ENCODE measurements at regions of chr6 and their contacts with region 1.

Region 1: DNA sequence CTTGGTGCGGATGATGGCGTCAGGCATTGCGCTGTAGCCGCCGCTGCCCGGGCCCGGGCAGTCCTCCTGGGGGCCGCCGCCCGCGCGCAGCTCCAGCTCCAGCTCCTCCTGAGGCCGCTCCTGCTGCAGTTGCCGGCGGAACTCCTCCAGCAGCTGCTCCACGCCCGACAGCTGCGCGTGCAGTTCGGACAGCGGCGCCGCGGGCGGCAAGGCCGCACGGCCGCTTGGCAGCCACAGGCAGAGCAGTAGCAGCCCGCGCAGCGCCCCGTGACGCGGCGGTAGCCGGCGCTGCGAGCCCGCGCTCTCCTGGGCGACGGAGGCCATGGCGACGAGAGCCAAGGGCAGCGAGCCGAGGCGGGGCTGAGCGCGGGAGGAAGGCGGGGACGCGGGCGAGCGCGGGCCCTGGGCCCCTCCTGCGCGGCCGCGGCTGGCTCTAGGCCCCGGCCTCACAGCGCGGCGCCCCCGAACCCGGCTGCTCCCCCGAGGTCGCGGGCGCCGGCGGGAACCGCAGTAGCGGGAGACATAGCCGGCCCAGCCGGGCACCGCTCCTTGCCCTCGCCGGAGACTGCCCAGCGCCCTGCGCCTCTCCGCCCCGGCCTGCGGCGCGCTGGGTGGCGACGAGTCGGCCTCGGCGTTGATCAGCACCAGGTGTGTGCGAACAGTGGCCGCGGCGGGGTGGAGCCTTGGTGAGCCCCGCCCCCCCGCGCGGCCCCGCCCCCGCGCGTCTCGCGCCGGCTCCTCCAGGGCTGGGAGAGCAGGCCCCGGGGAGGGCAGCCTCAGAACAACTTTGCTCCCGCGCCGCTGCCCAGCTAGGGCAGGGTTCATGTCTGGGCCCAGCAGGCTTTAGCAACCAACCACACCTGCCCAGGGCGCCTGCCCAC is at the start of gene LRP11:
- DNase-seq: no peak
- H3K4me3 ChIP-seq: peak within 1 kb of the TSS; percentile 65
- H3K27me3 ChIP-seq: no peaks in the 10 kb centered on the region
- CTCF ChIP-seq: no peak
- polyA plus RNA-seq, gene LRP11: 26.3 and 32.6 TPM in 2 replicates

Region 2: DNA sequence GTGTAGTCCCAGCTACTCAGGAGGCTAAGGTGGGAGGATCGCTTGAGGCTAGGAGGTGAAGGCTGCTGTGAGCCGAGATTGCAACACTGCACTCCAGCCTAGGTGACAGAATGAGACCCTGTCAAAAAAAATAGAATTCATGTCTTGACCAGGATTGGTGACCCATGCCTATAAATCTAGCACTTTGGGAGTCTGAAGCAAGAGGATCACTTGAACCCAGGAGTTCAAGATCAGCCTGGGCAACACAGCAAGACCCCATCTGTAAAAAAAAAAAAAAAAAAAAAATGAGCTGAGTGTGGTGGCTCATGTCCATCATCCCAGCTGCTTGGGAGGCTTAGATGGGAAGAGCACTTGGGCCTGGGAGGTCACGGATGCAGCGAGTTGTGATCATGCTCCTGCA is 263.4 kb before region 1 on chr6:
- CTCF ChIA-PET with region 1: no interaction called
- POLR2A ChIA-PET with region 1: no interaction called
- DNase-seq: no peak
- H3K4me3 ChIP-seq: no peak overlapping the region
- H3K27me3 ChIP-seq: no peaks in the 10 kb centered on the region
- CTCF ChIP-seq: no peak

Region 3: DNA sequence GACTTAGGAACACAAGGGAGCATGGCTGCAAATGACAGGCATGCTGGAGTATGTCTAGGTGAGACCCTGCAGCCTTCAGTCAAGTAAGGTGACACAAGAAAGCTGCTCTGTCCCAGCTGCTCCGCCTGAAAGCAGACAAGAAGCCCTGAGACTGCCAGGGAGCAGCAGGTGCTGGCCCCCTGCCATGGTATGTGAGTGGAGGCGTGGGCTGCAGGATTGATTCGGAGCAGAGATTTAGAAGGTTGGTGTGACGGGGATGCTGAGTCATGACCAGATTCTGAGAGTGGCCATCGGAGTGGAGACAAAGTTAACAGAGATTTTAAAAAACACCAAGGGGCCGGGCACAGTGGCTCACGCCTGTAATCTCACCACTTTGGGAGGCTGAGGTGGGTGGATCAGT is 17.6 kb before region 1 on chr6:
- CTCF ChIA-PET with region 1: interaction called, 27 read pairs
- POLR2A ChIA-PET with region 1: interaction called, 3 read pairs
- DNase-seq: no peak
- H3K4me3 ChIP-seq: no peak overlapping the region
- H3K27me3 ChIP-seq: no peaks in the 10 kb centered on the region
- CTCF ChIP-seq: no peak